Esophagus muscularis mucosa (tissue), 4 donors: ENCODE measurements at regions of chr22 and their contacts with region 1.

Region 1: GRCh38 chr22:35622191-35622913 is 5.2 kb upstream of the MB start:
- DNase-seq: no peak
- H3K4me3 ChIP-seq: no peak overlapping the region
- H3K27ac ChIP-seq: peak overlapping the region; percentile 76 to 87 (median 80)
- H3K4me1 ChIP-seq: peaks cover 45 to 63% (median 47%) of the 10 kb centered on the region in 4 donors
- H3K27me3 ChIP-seq: no peaks in the 10 kb centered on the region
- CTCF ChIP-seq: no peak
- EP300 ChIP-seq: no peak
- POLR2A ChIP-seq: no peak

Region 2: DNA sequence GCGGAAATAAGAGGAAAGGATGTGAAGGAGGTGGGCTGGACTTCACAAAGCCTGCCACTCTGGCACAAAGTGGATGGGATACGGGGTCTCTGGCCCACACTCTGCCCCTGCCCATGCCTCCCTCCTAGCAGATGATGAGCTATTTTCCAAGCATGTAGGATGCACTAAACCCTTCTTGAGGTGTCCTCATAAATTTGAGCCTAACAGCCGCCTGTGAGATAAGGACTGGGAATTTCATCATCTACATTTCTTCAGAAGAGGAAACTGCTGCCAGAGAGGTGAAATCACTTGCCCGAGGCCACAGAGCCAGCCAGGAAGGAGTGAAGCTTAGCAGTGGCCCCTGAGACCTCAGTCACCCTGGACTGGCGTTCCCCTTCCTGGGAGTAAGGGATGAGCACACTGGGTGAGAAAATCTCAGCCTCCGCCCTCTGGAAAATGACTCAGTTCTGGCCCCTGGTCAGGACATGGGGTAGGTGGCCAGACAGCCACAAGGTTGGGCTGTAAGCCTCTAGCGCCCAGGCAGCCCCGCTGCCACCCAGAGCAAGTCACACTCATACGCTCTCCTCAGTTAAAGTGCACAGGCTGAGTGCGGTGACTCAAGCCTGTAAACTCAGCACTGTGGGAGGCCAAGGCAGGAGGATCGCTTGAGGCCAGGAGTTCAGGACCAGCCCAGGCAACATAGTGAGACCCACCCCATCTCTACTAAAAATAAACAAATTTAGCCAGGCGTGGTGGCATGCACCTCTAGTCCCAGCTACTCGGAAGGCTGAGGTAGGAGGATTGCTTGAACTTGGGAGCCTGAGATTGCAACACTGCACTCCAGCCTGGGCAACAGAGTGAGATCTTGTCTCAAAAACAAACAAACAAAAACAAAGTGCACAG is 33.0 kb before region 1 on chr22:
- intact Hi-C with region 1: loop called (anchors 5 kb)
- DNase-seq: no peak
- H3K4me3 ChIP-seq: no peak overlapping the region
- H3K27ac ChIP-seq: peak overlapping the region; percentile 30 to 41 (median 34)
- H3K4me1 ChIP-seq: peaks cover 38 to 53% (median 49%) of the 10 kb centered on the region in 4 donors
- H3K27me3 ChIP-seq: no peaks in the 10 kb centered on the region
- CTCF ChIP-seq: no peak
- EP300 ChIP-seq: no peak
- POLR2A ChIP-seq: no peak